ENCODE measurements at regions of chr11 and their contacts with region 1.

Region 1: GRCh38 chr11:56841210-56841810 is 92.8 kb upstream of the OR9G4 start:
- DNase-seq: peak; percentile 52
- ATAC-seq: no peak
- H3K4me3 Mint-ChIP-seq: no peak overlapping the region
- H3K27ac Mint-ChIP-seq: no peak overlapping the region
- H3K4me1 Mint-ChIP-seq: no peaks in the 10 kb centered on the region
- H3K27me3 Mint-ChIP-seq: peaks cover 6% of the 10 kb centered on the region

Region 2: GRCh38 chr11:56876621-56877275 is 35.4 kb after region 1 on chr11:
- CTCF ChIA-PET with region 1: no interaction called
- POLR2A ChIA-PET with region 1: no interaction called
- intact Hi-C with region 1: loop called in 1 of 2 experiments (anchors 1 kb)
- DNase-seq: no peak
- ATAC-seq: no peak
- H3K4me3 Mint-ChIP-seq: no peak overlapping the region
- H3K27ac Mint-ChIP-seq: no peak overlapping the region
- H3K4me1 Mint-ChIP-seq: no peaks in the 10 kb centered on the region
- H3K27me3 Mint-ChIP-seq: no peaks in the 10 kb centered on the region

Region 3: GRCh38 chr11:57015679-57016078 is 174.4 kb after region 1 on chr11:
- CTCF ChIA-PET with region 1: no interaction called
- POLR2A ChIA-PET with region 1: no interaction called
- intact Hi-C with region 1: no loop called
- DNase-seq: no peak
- ATAC-seq: no peak
- H3K4me3 Mint-ChIP-seq: no peak overlapping the region
- H3K27ac Mint-ChIP-seq: no peak overlapping the region
- H3K4me1 Mint-ChIP-seq: no peaks in the 10 kb centered on the region
- H3K27me3 Mint-ChIP-seq: no peaks in the 10 kb centered on the region

Region 4: GRCh38 chr11:57116654-57117053 is 275.3 kb after region 1 on chr11:
- CTCF ChIA-PET with region 1: no interaction called
- POLR2A ChIA-PET with region 1: no interaction called
- intact Hi-C with region 1: loop called in 1 of 2 experiments (anchors 2 kb)
- DNase-seq: peak; percentile 46
- ATAC-seq: peak; percentile 23
- H3K4me3 Mint-ChIP-seq: no peak overlapping the region
- H3K27ac Mint-ChIP-seq: no peak overlapping the region
- H3K4me1 Mint-ChIP-seq: no peaks in the 10 kb centered on the region
- H3K27me3 Mint-ChIP-seq: peaks cover 4% of the 10 kb centered on the region

Region 5: GRCh38 chr11:57249384-57250319 is 408.3 kb after region 1 on chr11:
- CTCF ChIA-PET with region 1: interaction called, 69 read pairs
- POLR2A ChIA-PET with region 1: no interaction called
- intact Hi-C with region 1: loop called (anchors 1 kb)
- DNase-seq: peak; percentile 75
- ATAC-seq: peak; percentile 87
- H3K4me3 Mint-ChIP-seq: no peak overlapping the region
- H3K27ac Mint-ChIP-seq: no peak overlapping the region
- H3K4me1 Mint-ChIP-seq: peaks cover 16% of the 10 kb centered on the region
- H3K27me3 Mint-ChIP-seq: peaks cover 28% of the 10 kb centered on the region

Region 6: DNA sequence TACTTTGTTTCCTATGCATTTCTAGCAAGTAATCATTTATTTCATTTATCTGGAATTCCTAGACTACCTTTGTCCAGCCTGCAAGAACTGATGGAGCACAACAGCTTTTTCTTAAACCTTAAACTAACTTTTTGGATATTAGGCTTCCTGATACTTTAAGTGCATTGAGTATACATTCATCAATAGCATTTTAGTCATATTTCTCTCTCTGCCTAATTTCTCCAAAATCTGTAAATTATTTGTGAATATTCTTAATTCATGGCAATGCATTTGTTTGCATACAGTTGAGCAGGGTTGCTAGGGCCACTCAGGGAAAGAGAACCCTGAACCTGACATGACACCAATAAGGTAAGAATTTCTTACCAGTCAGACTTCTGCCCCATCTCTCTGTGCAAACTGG is 424.8 kb after region 1 on chr11:
- CTCF ChIA-PET with region 1: no interaction called
- POLR2A ChIA-PET with region 1: no interaction called
- intact Hi-C with region 1: no loop called
- DNase-seq: no peak
- ATAC-seq: no peak
- H3K4me3 Mint-ChIP-seq: no peak overlapping the region
- H3K27ac Mint-ChIP-seq: no peak overlapping the region
- H3K4me1 Mint-ChIP-seq: no peaks in the 10 kb centered on the region
- H3K27me3 Mint-ChIP-seq: peaks cover 19% of the 10 kb centered on the region

Region 7: DNA sequence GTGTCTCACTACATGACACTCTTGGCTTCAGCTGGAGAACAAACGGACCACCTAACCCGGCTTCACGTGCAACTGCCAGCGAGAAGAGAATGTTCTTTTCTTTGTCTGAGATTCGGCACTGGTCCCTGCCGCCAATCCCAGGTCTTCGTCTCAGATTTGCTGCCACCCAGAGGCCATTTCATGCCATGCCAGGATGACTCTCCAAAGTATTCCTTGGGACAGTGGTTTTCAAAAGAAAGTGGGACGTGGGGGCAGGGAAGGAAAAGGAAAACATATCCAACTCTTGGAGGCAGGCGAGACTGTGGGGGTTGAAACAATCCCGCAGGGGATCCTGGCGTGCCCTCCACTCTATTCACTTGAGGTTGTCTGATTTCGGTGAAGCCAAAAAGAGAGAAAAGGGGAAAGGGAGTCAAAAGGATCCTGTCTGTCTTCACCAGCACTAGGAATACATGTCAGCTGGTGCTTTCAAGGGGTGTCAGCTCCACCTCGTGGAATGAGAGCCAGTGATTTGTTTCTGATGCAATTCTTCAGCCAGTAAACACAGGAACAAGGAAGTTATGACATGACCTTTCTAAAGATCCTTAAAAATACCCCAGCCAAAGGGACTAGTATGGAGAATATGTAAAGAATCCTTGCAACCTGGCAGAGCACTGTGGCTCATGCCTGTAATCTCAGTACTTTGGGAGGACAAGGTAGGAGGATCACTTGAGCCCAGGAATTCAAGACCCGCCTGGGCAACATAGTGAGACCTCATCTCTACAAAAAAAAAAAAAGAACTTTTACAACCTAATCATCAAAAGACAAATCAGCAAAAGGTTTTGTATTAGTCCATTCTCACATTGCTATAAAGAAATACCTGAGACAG is 436.8 kb after region 1 on chr11:
- CTCF ChIA-PET with region 1: interaction called, 3 read pairs
- POLR2A ChIA-PET with region 1: no interaction called
- intact Hi-C with region 1: loop called (anchors 1 to 5 kb)
- DNase-seq: peak; percentile 65
- ATAC-seq: no peak
- H3K4me3 Mint-ChIP-seq: no peak overlapping the region
- H3K27ac Mint-ChIP-seq: no peak overlapping the region
- H3K4me1 Mint-ChIP-seq: peaks cover 2% of the 10 kb centered on the region
- H3K27me3 Mint-ChIP-seq: peaks cover 30% of the 10 kb centered on the region

Region 8: GRCh38 chr11:57345555-57346211 is 504.4 kb after region 1 on chr11:
- CTCF ChIA-PET with region 1: interaction called, 6 read pairs
- POLR2A ChIA-PET with region 1: no interaction called
- intact Hi-C with region 1: loop called in 1 of 2 experiments (anchors 10 kb)
- DNase-seq: peak; percentile 84
- ATAC-seq: peak; percentile 87
- H3K4me3 Mint-ChIP-seq: no peak overlapping the region
- H3K27ac Mint-ChIP-seq: peak overlapping the region; percentile 52
- H3K4me1 Mint-ChIP-seq: peaks cover 5% of the 10 kb centered on the region
- H3K27me3 Mint-ChIP-seq: no peaks in the 10 kb centered on the region

Region 9: DNA sequence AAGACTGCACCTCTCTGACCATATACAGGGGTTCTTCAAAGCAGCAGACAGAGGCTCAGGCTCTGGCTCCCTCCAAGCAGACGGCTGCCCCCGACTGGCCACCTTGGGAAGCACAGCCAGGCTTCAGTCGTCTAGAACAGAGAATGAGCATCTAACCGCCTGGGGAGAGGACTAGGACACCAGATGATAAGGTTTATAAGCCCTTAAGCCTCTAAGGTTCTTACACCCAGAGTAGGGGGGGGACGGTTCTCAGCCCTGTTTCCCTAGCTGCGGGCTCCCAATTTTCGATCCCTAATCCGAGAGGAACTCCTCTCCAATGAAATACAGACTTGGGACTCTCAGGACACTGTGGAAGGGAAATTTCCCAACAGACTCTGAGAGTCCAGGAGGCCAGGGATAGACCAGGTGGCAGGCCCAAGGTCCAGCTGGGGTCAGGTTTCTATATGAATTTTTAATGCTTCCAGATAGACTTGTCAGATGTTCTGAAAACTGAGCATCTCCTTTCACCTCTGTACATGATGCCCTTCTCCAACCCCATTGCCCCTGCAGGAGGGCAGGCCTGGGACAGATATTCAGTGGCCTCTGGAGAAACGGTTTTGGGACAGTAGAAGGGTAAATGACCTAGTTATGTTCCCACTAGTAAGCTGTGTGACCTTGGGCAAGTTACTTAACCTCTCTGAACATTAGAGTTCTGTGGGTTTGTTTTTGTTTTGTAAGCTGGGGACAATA is 639.3 kb after region 1 on chr11:
- CTCF ChIA-PET with region 1: no interaction called
- POLR2A ChIA-PET with region 1: no interaction called
- intact Hi-C with region 1: no loop called
- DNase-seq: peak; percentile 90
- ATAC-seq: peak; percentile 69
- H3K4me3 Mint-ChIP-seq: no peak overlapping the region
- H3K27ac Mint-ChIP-seq: no peak overlapping the region
- H3K4me1 Mint-ChIP-seq: peaks cover 15% of the 10 kb centered on the region
- H3K27me3 Mint-ChIP-seq: peaks cover 11% of the 10 kb centered on the region

Measured in activated CD4-positive, alpha-beta T cell treated with anti-CD3 and anti-CD28 coated beads for 36 hours (primary cell).